Ovary (tissue), 10 donors: ENCODE measurements at regions of chr6 and their contacts with region 1.

Region 1: GRCh38 chr6:7107578-7108195 is at the start of gene RREB1:
- DNase-seq: peak; percentile 75 to 79 (median 77)
- H3K4me3 ChIP-seq: peak within 1 kb of the TSS; percentile 78
- H3K27ac ChIP-seq: peak within 1 kb of the TSS; percentile 91 to 97
- H3K4me1 ChIP-seq: peaks cover 5% of the 10 kb centered on the region
- H3K27me3 ChIP-seq: no peaks in the 10 kb centered on the region
- CTCF ChIP-seq: no peak
- EP300 ChIP-seq: no peak
- POLR2A ChIP-seq: peak; percentile 49
- total RNA-seq, gene RREB1: 21.1 to 64.4 (median 53.3) TPM

Region 2: GRCh38 chr6:6766230-6766905 is 341.3 kb before region 1 on chr6:
- intact Hi-C with region 1: loop called in 1 of 4 experiments (anchors 10 kb)
- DNase-seq: no peak
- H3K4me3 ChIP-seq: no peak overlapping the region
- H3K27ac ChIP-seq: no peak overlapping the region
- H3K4me1 ChIP-seq: peaks cover 1% of the 10 kb centered on the region
- H3K27me3 ChIP-seq: no peaks in the 10 kb centered on the region
- CTCF ChIP-seq: no peak
- EP300 ChIP-seq: no peak
- POLR2A ChIP-seq: no peak

Region 3: GRCh38 chr6:6901205-6901731 is 206.4 kb before region 1 on chr6:
- intact Hi-C with region 1: no loop called
- DNase-seq: no peak
- H3K4me3 ChIP-seq: no peak overlapping the region
- H3K27ac ChIP-seq: no peak overlapping the region
- H3K4me1 ChIP-seq: no peaks in the 10 kb centered on the region
- H3K27me3 ChIP-seq: no peaks in the 10 kb centered on the region
- CTCF ChIP-seq: no peak
- EP300 ChIP-seq: no peak
- POLR2A ChIP-seq: no peak